Activated CD8-positive, alpha-beta T cell treated with anti-CD3 and anti-CD28 coated beads, Interleukin-2, amount 10 ng/mL, durations not matched to agents 7 days and 5 days (primary cell): ENCODE measurements at regions of chr6 and their contacts with region 1.

Region 1: GRCh38 chr6:90107771-90108282 is 188.8 kb downstream of the BACH2 start:
- DNase-seq: peak; percentile 52
- ATAC-seq: peak; percentile 50
- H3K4me3 Mint-ChIP-seq: peak overlapping the region; percentile 30
- H3K27ac Mint-ChIP-seq: peak overlapping the region; percentile 60
- H3K4me1 Mint-ChIP-seq: peaks cover 93% of the 10 kb centered on the region
- H3K27me3 Mint-ChIP-seq: no peaks in the 10 kb centered on the region

Region 2: GRCh38 chr6:89970609-89971337 is 137.1 kb before region 1 on chr6:
- CTCF ChIA-PET with region 1: no interaction called
- POLR2A ChIA-PET with region 1: no interaction called
- DNase-seq: no peak
- ATAC-seq: no peak
- H3K4me3 Mint-ChIP-seq: no peak overlapping the region
- H3K27ac Mint-ChIP-seq: no peak overlapping the region
- H3K4me1 Mint-ChIP-seq: peaks cover 29% of the 10 kb centered on the region
- H3K27me3 Mint-ChIP-seq: no peaks in the 10 kb centered on the region

Region 3: DNA sequence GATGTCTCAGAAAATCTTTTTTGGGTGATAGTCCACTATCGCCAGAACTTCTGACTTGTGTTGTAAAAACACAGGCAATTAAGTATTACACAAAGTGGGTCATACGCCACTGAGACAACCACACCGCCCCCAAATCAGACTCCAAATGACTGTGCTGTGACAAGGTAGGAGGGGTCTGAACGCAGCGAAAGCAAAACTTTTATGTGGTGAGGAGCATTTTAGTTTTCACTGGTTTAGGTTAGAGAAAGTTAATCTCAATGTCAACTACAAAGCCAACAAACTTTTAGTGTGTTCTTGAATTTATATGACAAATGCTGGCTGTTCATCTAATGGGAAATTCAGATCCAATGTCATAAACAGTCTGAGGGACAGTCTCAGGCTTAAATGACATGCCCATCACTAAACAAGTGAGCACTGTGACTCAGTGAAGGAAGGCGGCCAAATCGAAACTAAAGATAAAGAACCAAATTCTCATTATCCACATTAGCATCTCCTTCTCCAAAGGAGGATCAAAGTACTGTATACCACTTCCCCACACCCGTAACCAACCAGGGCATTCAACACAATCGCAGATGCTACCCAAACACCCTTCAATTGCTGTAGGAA is 26.8 kb before region 1 on chr6:
- CTCF ChIA-PET with region 1: interaction called, 33 read pairs
- POLR2A ChIA-PET with region 1: interaction called, 14 read pairs
- DNase-seq: peak; percentile 92
- ATAC-seq: peak; percentile 71
- H3K4me3 Mint-ChIP-seq: peak overlapping the region; percentile 93
- H3K27ac Mint-ChIP-seq: peak overlapping the region; percentile 99
- H3K4me1 Mint-ChIP-seq: peaks cover 85% of the 10 kb centered on the region
- H3K27me3 Mint-ChIP-seq: no peaks in the 10 kb centered on the region